Posterior vena cava (tissue), 2 donors: ENCODE measurements at regions of chr18 and their contacts with region 1.

Region 1: DNA sequence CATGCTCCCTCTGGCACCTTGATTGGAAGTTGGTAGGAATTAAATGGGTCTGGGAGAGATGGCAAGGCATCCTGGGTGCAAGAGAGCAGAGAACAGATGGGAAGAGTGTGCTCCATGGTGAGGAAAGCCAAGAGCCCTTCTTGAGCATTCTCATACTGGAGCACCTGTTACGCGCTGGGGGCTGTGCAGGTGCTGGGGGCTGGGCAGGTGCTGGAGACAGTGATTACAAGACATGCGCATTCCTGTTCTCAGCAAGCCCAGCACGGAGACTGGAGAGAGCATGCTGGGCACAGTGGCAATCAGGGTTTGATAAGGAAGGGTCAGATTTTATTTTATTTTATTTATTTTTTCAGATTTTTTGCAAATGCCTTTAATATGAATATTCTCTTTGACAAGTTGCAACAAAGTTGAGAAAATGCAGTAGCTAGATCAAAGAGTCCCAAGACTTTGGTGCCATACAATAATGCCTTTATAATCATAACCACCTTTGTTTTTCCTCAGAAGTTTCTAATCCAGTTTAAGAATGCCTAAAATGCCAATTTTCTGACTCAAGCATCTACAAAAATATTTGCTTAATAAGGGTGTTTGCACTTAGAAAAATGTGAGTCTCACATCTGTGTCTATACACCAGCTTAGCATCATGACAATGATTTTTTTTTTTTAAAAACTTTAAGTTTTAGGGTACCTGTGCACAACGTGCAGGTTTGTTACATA is 193.3 kb downstream of the RNF152 start:
- DNase-seq: no peak

Region 2: GRCh38 chr18:62828852-62829251 is 1129.3 kb after region 1 on chr18:
- intact Hi-C with region 1: loop called in 1 of 2 experiments (anchors 10 kb)
- DNase-seq: no peak